PC-3 (cell line): ENCODE measurements at regions of chr19 and their contacts with region 1.

Region 1: DNA sequence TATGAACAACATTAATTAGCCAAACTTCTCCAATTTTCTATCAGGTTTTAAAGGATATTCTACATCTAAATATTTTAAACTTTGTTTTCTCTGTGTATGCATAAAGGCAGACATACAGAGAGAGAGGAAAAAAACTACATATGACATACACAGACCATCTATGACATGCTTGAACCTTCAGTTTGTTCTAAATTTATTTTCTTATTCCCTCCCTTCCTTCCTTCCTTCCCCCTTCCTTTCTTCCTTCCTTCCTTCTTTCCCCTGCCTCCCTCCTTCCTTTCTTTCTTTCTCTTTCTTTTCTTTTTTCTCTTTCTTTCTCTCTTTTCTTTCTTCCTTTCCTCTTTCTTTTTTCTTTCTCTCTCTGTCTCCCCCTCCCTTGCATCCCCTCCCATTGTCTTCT is 35.8 kb upstream of the CD70 start:
- DNase-seq: no peak
- ATAC-seq: no peak
- H3K4me3 ChIP-seq: no peak overlapping the region
- H3K27ac ChIP-seq: no peak overlapping the region
- H3K4me1 ChIP-seq: no peaks in the 10 kb centered on the region
- H3K27me3 ChIP-seq: no peaks in the 10 kb centered on the region
- CTCF ChIP-seq: no peak

Region 2: GRCh38 chr19:6828698-6829562 is 202.2 kb after region 1 on chr19:
- CTCF ChIA-PET with region 1: no interaction called
- POLR2A ChIA-PET with region 1: interaction called, 14 read pairs
- intact Hi-C with region 1: no loop called
- DNase-seq: peak; percentile 81
- ATAC-seq: peak; percentile 38
- H3K4me3 ChIP-seq: peak overlapping the region; percentile 15; the same call in 1 of the 2 replicates
- H3K27ac ChIP-seq: peak overlapping the region; percentile 39; the same call in 1 of the 2 replicates
- H3K4me1 ChIP-seq: peaks cover 11% of the 10 kb centered on the region
- H3K27me3 ChIP-seq: no peaks in the 10 kb centered on the region
- CTCF ChIP-seq: no peak